CD8-positive, alpha-beta T cell (primary cell): ENCODE measurements at regions of chr19 and their contacts with region 1.

Region 1: DNA sequence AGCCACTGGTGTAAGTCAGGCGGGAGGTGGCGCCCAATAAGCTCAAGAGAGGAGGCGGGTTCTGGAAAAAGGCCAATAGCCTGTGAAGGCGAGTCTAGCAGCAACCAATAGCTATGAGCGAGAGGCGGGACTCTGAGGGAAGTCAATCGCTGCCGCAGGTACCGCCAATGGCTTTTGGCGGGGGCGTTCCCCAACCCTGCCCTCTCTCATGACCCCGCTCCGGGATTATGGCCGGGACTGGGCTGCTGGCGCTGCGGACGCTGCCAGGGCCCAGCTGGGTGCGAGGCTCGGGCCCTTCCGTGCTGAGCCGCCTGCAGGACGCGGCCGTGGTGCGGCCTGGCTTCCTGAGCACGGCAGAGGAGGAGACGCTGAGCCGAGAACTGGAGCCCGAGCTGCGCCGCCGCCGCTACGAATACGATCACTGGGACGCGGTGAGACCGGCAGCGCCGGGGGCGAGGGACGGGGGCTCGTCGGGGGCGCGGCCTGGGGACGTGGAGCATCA is at the start of gene ALKBH7:
- DNase-seq: peak; percentile 90 to 100 (median 95)
- ATAC-seq: peak; percentile 75
- H3K4me3 ChIP-seq: peak within 1 kb of the TSS; percentile 67 to 86
- H3K4me3 Mint-ChIP-seq: peak within 1 kb of the TSS; percentile 92
- H3K27ac ChIP-seq: peak within 1 kb of the TSS; percentile 70 to 93
- H3K27ac Mint-ChIP-seq: peak within 1 kb of the TSS; percentile 93
- H3K4me1 ChIP-seq: peaks cover 12% of the 10 kb centered on the region
- H3K4me1 Mint-ChIP-seq: peaks cover 14% of the 10 kb centered on the region
- H3K27me3 ChIP-seq: no peaks in the 10 kb centered on the region
- H3K27me3 Mint-ChIP-seq: no peaks in the 10 kb centered on the region
- CTCF ChIP-seq: no peak
- total RNA-seq, gene ALKBH7: 63.6 to 66.2 TPM

Region 2: DNA sequence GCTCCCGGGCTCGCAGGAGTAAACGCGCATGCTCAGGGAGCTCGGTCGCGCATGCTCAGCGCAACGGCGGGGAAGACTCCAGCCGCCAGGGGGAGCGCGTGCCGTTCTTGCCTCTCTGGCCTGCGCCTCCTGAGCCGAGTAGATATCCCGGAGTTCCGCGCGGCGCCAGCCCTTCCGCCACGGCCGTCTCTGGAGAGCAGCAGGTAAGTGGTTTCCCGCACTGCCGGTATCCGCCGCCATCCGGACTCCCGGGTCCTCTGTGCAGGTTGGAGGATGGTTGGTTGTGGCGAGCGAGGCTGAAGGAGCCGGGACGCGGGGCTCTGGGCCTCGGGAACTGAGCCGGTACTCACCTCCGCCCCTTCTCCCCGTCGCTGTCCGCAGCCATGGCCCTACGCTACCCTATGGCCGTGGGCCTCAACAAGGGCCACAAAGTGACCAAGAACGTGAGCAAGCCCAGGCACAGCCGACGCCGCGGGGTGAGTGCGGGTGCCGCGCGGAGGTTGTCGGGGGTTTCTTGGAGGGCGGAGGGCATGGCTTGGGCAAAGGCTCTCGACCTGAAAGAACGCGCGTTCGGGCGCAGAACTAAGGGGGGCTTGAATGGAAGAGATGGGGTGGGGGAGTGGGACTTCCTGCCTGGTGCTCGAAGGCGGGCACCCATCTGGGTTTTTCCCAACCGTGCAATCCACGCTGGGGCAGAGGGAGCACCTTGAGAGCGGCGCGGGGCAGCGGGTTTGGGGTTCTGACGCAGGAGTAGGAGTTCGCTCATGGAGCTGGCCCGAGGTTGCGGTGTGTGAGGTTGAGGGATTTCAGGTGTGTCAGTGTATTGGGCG is 682.3 kb before region 1 on chr19 and contains the start of gene RPL36:
- CTCF ChIA-PET with region 1: no interaction called
- POLR2A ChIA-PET with region 1: no interaction called
- intact Hi-C with region 1: loop called in 1 of 2 experiments (anchors 10 kb)
- DNase-seq: peak; percentile 95 to 100 (median 99)
- ATAC-seq: peak; percentile 63
- H3K4me3 ChIP-seq: peak within 1 kb of the TSS; percentile 84 to 96
- H3K4me3 Mint-ChIP-seq: peak within 1 kb of the TSS; percentile 91
- H3K27ac ChIP-seq: peak within 1 kb of the TSS; percentile 86 to 89
- H3K27ac Mint-ChIP-seq: peak within 1 kb of the TSS; percentile 93
- H3K4me1 ChIP-seq: peaks cover 26% of the 10 kb centered on the region
- H3K4me1 Mint-ChIP-seq: peaks cover 48% of the 10 kb centered on the region
- H3K27me3 ChIP-seq: no peaks in the 10 kb centered on the region
- H3K27me3 Mint-ChIP-seq: no peaks in the 10 kb centered on the region
- CTCF ChIP-seq: peak; percentile 96
- total RNA-seq, gene RPL36: 1,425 to 1,465 TPM

Region 3: DNA sequence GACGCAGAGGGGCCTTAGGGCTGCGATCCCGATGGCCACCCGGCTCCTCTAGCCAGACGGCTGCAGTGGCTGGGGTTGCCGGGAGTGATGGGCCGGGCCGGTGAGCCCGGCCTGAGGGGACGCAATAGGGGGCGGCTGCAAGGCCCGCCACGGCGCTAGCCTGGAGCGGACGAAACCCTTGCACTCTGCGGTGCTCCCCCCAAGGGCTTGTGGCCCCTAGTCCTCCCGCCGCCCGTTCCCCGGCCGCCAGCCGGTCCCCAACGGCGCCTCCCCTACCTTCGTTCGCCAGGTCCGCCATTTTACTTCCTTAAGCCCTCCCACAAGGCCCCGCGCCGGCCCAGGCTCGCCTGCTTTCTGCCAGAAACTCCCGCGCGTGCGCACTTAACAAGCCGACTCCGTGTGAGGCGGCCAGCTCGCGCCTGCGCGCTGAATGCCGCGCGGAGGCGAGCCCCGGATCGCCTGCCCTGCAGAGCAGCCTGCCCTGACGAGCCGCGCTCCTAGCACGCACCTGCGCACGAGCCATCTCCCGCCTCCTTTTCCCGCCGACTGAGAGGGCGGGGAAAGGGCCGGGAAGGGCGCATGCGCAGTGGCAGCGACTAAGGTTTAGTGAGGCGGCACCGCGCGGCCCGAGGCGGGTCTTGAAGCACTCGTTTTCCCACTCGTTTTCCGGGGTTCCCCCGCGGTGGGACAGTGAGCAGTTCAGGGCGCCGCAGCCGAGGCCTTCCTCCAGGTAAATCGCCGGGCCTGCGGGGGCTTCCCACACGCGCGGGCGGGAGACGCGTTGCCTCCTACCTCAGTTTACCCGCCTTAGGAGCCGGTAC is 394.6 kb before region 1 on chr19 and contains the start of gene RANBP3:
- CTCF ChIA-PET with region 1: no interaction called
- POLR2A ChIA-PET with region 1: no interaction called
- intact Hi-C with region 1: loop called in 1 of 2 experiments (anchors 10 kb)
- DNase-seq: peak; percentile 94 to 100 (median 99)
- ATAC-seq: peak; percentile 88
- H3K4me3 ChIP-seq: peak within 1 kb of the TSS; percentile 65 to 91
- H3K4me3 Mint-ChIP-seq: peak within 1 kb of the TSS; percentile 96
- H3K27ac ChIP-seq: peak within 1 kb of the TSS; percentile 83 to 85
- H3K27ac Mint-ChIP-seq: peak within 1 kb of the TSS; percentile 95
- H3K4me1 ChIP-seq: peaks cover 50% of the 10 kb centered on the region
- H3K4me1 Mint-ChIP-seq: peaks cover 56% of the 10 kb centered on the region
- H3K27me3 ChIP-seq: no peaks in the 10 kb centered on the region
- H3K27me3 Mint-ChIP-seq: no peaks in the 10 kb centered on the region
- CTCF ChIP-seq: no peak
- total RNA-seq, gene RANBP3: 109 to 118 TPM

Region 4: DNA sequence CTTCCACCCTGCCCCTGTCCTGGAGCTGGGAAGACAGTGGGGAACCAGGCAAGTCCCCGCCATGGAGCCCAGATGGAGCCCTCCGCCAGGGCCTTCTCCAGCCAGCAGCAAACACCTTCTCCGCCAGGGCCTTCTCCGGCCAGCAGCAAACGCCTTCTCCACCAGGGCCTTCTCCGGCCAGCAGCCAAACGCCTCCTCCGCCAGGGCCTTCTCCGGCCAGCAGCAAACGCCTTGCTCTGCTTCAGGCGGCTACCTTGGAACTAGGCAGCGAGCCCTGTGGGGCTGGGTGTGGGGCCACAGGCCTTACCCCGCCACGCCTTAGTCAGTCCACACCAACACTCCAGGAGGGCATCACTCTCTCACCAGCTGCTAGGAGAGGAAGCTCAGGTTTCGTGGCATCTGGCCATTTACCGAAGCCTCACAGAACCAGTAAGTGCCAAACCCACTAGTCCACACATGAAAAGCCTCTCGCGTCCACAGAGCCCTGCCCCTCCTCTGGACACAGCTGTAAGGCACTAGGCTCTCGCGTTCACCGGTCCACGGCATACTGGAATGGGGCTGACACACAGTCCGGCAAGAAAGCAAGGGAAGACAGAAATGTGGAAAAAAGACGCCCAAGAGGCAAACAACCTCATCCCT is 133.9 kb before region 1 on chr19:
- CTCF ChIA-PET with region 1: no interaction called
- POLR2A ChIA-PET with region 1: no interaction called
- intact Hi-C with region 1: no loop called
- DNase-seq: no peak
- ATAC-seq: no peak
- H3K4me3 ChIP-seq: no peak overlapping the region
- H3K4me3 Mint-ChIP-seq: no peak overlapping the region
- H3K27ac ChIP-seq: no peak overlapping the region
- H3K27ac Mint-ChIP-seq: peak overlapping the region; percentile 57
- H3K4me1 ChIP-seq: peaks cover 19% of the 10 kb centered on the region
- H3K4me1 Mint-ChIP-seq: peaks cover 44% of the 10 kb centered on the region
- H3K27me3 ChIP-seq: no peaks in the 10 kb centered on the region
- H3K27me3 Mint-ChIP-seq: no peaks in the 10 kb centered on the region
- CTCF ChIP-seq: no peak

Region 5: GRCh38 chr19:6362027-6362350 is 10.7 kb before region 1 on chr19:
- CTCF ChIA-PET with region 1: interaction called, 7 read pairs
- POLR2A ChIA-PET with region 1: interaction called, 27 read pairs
- intact Hi-C with region 1: loop called (anchors 1 kb)
- DNase-seq: no peak
- ATAC-seq: peak; percentile 1
- H3K4me3 ChIP-seq: peak overlapping the region; percentile 78 to 79
- H3K4me3 Mint-ChIP-seq: peak overlapping the region; percentile 93
- H3K27ac ChIP-seq: peak overlapping the region; percentile 72 to 85
- H3K27ac Mint-ChIP-seq: peak overlapping the region; percentile 94
- H3K4me1 ChIP-seq: peaks cover 21% of the 10 kb centered on the region
- H3K4me1 Mint-ChIP-seq: peaks cover 25% of the 10 kb centered on the region
- H3K27me3 ChIP-seq: no peaks in the 10 kb centered on the region
- H3K27me3 Mint-ChIP-seq: no peaks in the 10 kb centered on the region
- CTCF ChIP-seq: no peak

Region 6: DNA sequence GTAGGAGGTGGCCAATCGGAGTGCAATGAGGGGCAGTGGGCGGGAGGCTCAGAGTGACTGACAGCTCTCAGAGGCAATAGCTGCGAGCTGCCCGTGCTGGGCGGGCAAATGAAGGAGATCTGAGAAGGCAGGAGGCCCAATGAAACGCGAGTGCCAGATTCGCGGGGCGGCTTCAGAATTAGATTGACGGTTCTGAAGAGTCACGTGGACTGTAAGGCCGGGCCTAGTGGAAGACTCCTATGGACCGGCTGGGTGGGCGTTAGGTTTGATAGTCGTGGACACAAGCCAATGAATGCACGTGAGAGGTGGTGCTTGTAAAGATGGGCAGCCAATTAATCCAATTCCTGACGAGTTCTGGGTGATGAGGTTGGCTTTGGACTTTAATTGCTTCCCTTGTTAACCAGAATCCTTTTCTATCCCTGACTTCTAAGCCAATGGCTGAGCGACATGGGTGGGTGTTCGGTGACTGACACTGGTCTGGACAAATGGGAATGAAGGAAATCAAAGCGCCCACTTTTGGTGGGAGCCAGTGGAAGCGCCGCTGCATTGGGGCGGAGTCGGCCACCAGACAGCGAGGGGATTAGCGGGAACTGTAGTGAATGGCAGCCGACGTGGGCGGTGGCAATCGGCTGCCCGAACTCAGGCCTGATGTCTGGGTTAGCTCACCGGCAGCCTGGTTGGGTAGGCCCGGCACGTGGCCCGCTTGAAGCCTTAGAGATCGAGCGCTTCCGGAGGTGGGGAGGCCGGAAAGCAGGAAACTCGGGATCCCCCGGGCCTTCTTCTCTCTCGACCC is 52.5 kb after region 1 on chr19:
- CTCF ChIA-PET with region 1: no interaction called
- POLR2A ChIA-PET with region 1: interaction called, 19 read pairs
- intact Hi-C with region 1: loop called (anchors 1 kb)
- DNase-seq: peak; percentile 97 to 100 (median 98)
- ATAC-seq: peak; percentile 82
- H3K4me3 ChIP-seq: peak overlapping the region; percentile 7 to 48
- H3K4me3 Mint-ChIP-seq: peak overlapping the region; percentile 78
- H3K27ac ChIP-seq: peak overlapping the region; percentile 39 to 92
- H3K27ac Mint-ChIP-seq: peak overlapping the region; percentile 93
- H3K4me1 ChIP-seq: peaks cover 35% of the 10 kb centered on the region
- H3K4me1 Mint-ChIP-seq: peaks cover 37% of the 10 kb centered on the region
- H3K27me3 ChIP-seq: no peaks in the 10 kb centered on the region
- H3K27me3 Mint-ChIP-seq: no peaks in the 10 kb centered on the region
- CTCF ChIP-seq: no peak

Region 7: DNA sequence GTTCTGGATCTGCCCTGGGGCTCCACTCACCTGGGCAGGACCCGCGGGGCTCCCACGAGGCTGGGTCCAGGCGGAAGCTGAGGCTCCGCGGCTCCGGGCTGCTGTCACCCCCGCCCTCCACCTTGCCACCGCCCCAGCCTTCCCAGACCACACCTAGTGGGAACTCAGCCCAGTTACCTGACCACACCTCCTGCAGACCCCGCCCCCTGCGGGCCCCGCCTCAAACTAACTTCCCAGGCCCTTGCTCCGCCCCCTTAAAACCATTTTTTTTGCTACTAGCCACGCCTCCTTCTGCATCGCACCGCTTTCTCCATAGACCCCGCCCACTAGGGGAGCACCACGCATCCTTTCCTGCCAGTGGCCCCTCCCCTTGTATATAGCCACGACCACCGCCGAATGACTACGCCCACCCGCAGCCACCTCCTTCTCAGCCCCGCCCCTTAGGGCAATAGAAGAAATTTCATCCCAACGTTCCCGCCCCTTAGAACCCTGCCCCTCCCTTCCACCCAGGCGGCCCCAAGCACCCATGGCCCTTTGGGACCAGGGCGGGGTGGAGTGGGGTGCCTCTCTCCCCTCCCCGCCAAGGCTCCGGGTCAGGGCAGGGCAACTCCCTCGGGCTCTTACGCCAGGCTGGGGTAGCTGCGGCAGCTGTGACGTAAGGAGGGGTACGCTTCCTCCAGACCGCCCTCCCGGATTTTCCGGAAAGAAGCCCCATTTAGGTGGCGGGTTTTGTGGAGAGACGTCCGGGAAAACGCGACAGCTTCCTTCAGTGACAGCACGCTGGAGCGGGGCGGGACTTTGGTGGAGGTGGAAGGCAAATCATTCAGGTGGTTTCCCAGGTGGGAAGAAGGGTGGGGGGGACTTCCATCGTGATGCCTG is 395.0 kb after region 1 on chr19 and contains the start of gene SH2D3A:
- CTCF ChIA-PET with region 1: no interaction called
- POLR2A ChIA-PET with region 1: no interaction called
- intact Hi-C with region 1: loop called in 1 of 2 experiments (anchors 2 kb)
- DNase-seq: peak; percentile 88 to 99 (median 96)
- ATAC-seq: peak; percentile 74
- H3K4me3 ChIP-seq: peak within 1 kb of the TSS; percentile 57 to 58
- H3K4me3 Mint-ChIP-seq: peak within 1 kb of the TSS; percentile 87
- H3K27ac ChIP-seq: peak within 1 kb of the TSS; percentile 84 to 97
- H3K27ac Mint-ChIP-seq: peak within 1 kb of the TSS; percentile 97
- H3K4me1 ChIP-seq: peaks cover 43% of the 10 kb centered on the region
- H3K4me1 Mint-ChIP-seq: peaks cover 50% of the 10 kb centered on the region
- H3K27me3 ChIP-seq: no peaks in the 10 kb centered on the region
- H3K27me3 Mint-ChIP-seq: no peaks in the 10 kb centered on the region
- CTCF ChIP-seq: no peak
- total RNA-seq, gene SH2D3A: 33.5 to 38.8 TPM